Colonic mucosa (tissue), 4 donors: ENCODE measurements at regions of chr11 and their contacts with region 1.

Region 1: GRCh38 chr11:72179804-72180396 is 12.0 kb upstream of the FOLR1 start:
- DNase-seq: no peak
- H3K4me3 ChIP-seq: no peak overlapping the region
- H3K27ac ChIP-seq: no peak overlapping the region
- H3K4me1 ChIP-seq: no peaks in the 10 kb centered on the region
- H3K27me3 ChIP-seq: no peaks in the 10 kb centered on the region
- CTCF ChIP-seq: no peak

Region 2: DNA sequence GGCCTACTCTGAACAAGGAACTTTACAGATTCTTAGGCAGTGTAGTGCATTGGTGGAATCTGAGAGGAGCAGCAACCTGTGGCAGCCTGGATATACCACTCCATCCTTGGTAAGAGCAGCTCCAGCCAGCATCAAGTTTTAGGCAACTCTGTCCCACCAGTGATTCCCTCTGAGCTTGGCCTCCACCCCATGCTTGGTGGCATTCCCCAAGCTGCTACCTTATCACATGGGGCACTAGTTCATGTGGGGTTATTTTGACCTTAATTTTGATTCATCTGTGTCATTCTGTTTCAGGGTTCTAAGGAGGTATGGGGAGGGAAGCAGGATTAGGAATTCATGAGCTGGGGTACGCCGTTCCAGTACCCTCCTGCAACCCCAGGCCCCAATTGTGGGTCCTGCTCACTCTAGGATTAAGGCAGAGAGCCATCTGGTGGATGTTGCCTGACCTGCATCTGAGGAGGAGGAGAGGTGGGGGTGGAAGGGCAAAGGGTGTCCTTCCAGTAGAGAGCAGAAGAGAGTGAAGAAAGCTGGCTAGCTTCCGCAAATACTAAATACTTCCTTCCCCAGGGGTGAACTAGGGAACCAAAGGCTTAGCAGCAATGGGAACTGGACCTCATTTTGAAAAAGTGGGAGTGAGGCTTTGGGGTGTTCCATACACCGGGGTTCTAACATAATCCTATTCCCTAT is 88.8 kb before region 1 on chr11:
- intact Hi-C with region 1: loop called (anchors 5 kb)
- DNase-seq: peak; percentile 87
- H3K4me3 ChIP-seq: no peak overlapping the region
- H3K27ac ChIP-seq: no peak overlapping the region
- H3K4me1 ChIP-seq: peaks cover 3% of the 10 kb centered on the region
- H3K27me3 ChIP-seq: no peaks in the 10 kb centered on the region
- CTCF ChIP-seq: peak; percentile 89

Region 3: DNA sequence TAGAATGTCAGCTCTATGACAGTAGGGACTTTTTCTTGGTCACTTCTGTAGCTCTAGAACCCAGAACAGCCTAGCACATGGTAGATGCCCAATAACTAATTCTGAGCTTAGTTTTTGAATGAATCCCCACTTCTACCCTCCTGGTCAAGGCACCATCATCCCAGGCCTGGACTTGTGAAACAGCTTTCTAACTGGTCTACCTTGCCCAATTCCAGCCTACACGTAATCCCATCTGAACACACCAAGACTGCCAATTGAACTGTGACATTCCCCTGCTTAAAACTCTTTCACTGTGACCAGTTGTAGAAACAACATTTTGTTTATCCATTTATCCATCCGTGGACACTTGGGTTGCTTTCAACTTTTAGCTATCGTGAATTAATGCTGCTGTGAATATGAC is 50.5 kb before region 1 on chr11:
- intact Hi-C with region 1: no loop called
- DNase-seq: no peak
- H3K4me3 ChIP-seq: no peak overlapping the region
- H3K27ac ChIP-seq: no peak overlapping the region
- H3K4me1 ChIP-seq: no peaks in the 10 kb centered on the region
- H3K27me3 ChIP-seq: no peaks in the 10 kb centered on the region
- CTCF ChIP-seq: no peak

Region 4: GRCh38 chr11:72141066-72141465 is 38.8 kb before region 1 on chr11:
- intact Hi-C with region 1: loop called (anchors 5 kb)
- DNase-seq: no peak
- H3K4me3 ChIP-seq: no peak overlapping the region
- H3K27ac ChIP-seq: no peak overlapping the region
- H3K4me1 ChIP-seq: no peaks in the 10 kb centered on the region
- H3K27me3 ChIP-seq: no peaks in the 10 kb centered on the region
- CTCF ChIP-seq: no peak

Region 5: GRCh38 chr11:72224564-72225410 is 44.9 kb after region 1 on chr11 and contains the start of gene INPPL1:
- intact Hi-C with region 1: loop called (anchors 5 kb)
- DNase-seq: peak; percentile 65
- H3K4me3 ChIP-seq: peak within 1 kb of the TSS; percentile 75
- H3K27ac ChIP-seq: peak within 1 kb of the TSS; percentile 98
- H3K4me1 ChIP-seq: no peaks in the 10 kb centered on the region
- H3K27me3 ChIP-seq: no peaks in the 10 kb centered on the region
- CTCF ChIP-seq: no peak
- total RNA-seq, gene INPPL1: 120 to 166 TPM

Region 6: GRCh38 chr11:72405009-72405408 is 225.1 kb after region 1 on chr11:
- intact Hi-C with region 1: no loop called
- DNase-seq: no peak
- H3K4me3 ChIP-seq: no peak overlapping the region
- H3K27ac ChIP-seq: no peak overlapping the region
- H3K4me1 ChIP-seq: no peaks in the 10 kb centered on the region
- H3K27me3 ChIP-seq: no peaks in the 10 kb centered on the region
- CTCF ChIP-seq: no peak

Region 7: GRCh38 chr11:72613977-72614376 is 434.1 kb after region 1 on chr11:
- intact Hi-C with region 1: no loop called
- DNase-seq: peak; percentile 27
- H3K4me3 ChIP-seq: no peak overlapping the region
- H3K27ac ChIP-seq: no peak overlapping the region
- H3K4me1 ChIP-seq: no peaks in the 10 kb centered on the region
- H3K27me3 ChIP-seq: no peaks in the 10 kb centered on the region
- CTCF ChIP-seq: no peak